ENCODE measurements at regions of chr20 and their contacts with region 1.

Region 1: GRCh38 chr20:49384437-49385088 is 97.9 kb downstream of the KCNB1 start:
- DNase-seq: peak; percentile 50
- H3K4me3 Mint-ChIP-seq: no peak overlapping the region
- H3K27ac Mint-ChIP-seq: no peak overlapping the region
- H3K4me1 Mint-ChIP-seq: peaks cover 6% of the 10 kb centered on the region
- H3K27me3 Mint-ChIP-seq: peaks cover 19% of the 10 kb centered on the region

Region 2: GRCh38 chr20:49484180-49485140 is 99.9 kb after region 1 on chr20:
- intact Hi-C with region 1: loop called (anchors 1 kb)
- DNase-seq: peak; percentile 67
- H3K4me3 Mint-ChIP-seq: peak overlapping the region; percentile 85
- H3K27ac Mint-ChIP-seq: peak overlapping the region; percentile 66
- H3K4me1 Mint-ChIP-seq: peaks cover 9% of the 10 kb centered on the region
- H3K27me3 Mint-ChIP-seq: peaks cover 48% of the 10 kb centered on the region

Region 3: GRCh38 chr20:49508435-49509199 is 124.1 kb after region 1 on chr20:
- intact Hi-C with region 1: loop called (anchors 5 kb)
- DNase-seq: no peak
- H3K4me3 Mint-ChIP-seq: no peak overlapping the region
- H3K27ac Mint-ChIP-seq: no peak overlapping the region
- H3K4me1 Mint-ChIP-seq: no peaks in the 10 kb centered on the region
- H3K27me3 Mint-ChIP-seq: peaks cover 36% of the 10 kb centered on the region